Activated naive CD4-positive, alpha-beta T cell treated with anti-CD3 and anti-CD28 coated beads, Interleukin-2, amount 10 ng/mL, durations not matched to agents 7 days and 5 days (primary cell): ENCODE measurements at regions of chr2 and their contacts with region 1.

Region 1: GRCh38 chr2:69559442-69560146 is 83.9 kb downstream of the AAK1 start:
- DNase-seq: no peak
- H3K4me3 Mint-ChIP-seq: no peak overlapping the region
- H3K27ac Mint-ChIP-seq: no peak overlapping the region
- H3K4me1 Mint-ChIP-seq: peaks cover 36% of the 10 kb centered on the region
- H3K27me3 Mint-ChIP-seq: no peaks in the 10 kb centered on the region

Region 2: DNA sequence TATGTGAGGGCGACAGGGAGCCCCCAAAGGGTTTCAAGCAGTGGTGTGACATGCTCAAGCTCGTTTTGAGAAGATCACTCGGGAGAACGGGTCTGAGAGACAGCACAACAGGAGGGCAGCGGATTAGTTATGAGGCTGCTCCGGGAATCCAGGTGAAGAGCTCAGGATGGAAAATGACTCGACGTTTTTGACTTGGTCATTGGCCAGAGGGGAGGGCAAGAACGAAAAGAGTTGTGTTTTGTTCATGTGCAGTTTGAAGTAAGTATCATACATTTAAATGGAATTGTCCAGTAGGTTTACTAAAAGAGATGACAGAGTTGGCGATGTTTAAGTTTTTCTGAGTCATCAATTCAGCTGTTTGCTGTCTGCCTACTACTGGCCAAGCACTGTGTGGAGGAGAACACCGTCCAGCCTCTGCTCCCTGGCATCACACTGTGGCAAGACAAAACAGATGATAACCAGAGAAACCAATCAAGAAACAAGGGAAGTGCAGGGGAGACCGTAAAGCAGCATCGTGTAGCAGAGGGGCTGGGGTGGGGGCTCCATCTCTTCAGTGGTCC is 157.0 kb after region 1 on chr2:
- CTCF ChIA-PET with region 1: interaction called, 25 read pairs
- DNase-seq: no peak
- H3K4me3 Mint-ChIP-seq: no peak overlapping the region
- H3K27ac Mint-ChIP-seq: no peak overlapping the region
- H3K4me1 Mint-ChIP-seq: peaks cover 9% of the 10 kb centered on the region
- H3K27me3 Mint-ChIP-seq: peaks cover 8% of the 10 kb centered on the region